H1 (cell line): ENCODE measurements at regions of chr20 and their contacts with region 1.

Region 1: GRCh38 chr20:21048841-21049273 is 57.3 kb downstream of the LINC00237 start:
- DNase-seq: peak in 1 of 2 experiments; percentile 96
- H3K4me3 ChIP-seq: no peak overlapping the region
- H3K27ac ChIP-seq: no peak overlapping the region
- H3K4me1 ChIP-seq: peaks cover 5 to 13% (median 10%) of the 10 kb centered on the region in 4 experiments; a peak in 6 of 7 replicates
- H3K27me3 ChIP-seq: no peaks in the 10 kb centered on the region
- CTCF ChIP-seq: peak; percentile 81 to 91 (median 90)
- EP300 ChIP-seq: no peak
- POLR2A ChIP-seq: no peak
- RAD21 ChIP-seq: peak; percentile 83 to 86

Region 2: GRCh38 chr20:20603339-20603990 is 445.4 kb before region 1 on chr20:
- CTCF ChIA-PET with region 1: no interaction called
- POLR2A ChIA-PET with region 1: no interaction called
- DNase-seq: no peak
- H3K4me3 ChIP-seq: no peak overlapping the region
- H3K27ac ChIP-seq: no peak overlapping the region
- H3K4me1 ChIP-seq: no peaks in the 10 kb centered on the region; a peak in 1 of 7 replicates
- H3K27me3 ChIP-seq: no peaks in the 10 kb centered on the region
- CTCF ChIP-seq: no peak
- EP300 ChIP-seq: no peak
- POLR2A ChIP-seq: no peak
- RAD21 ChIP-seq: no peak

Region 3: GRCh38 chr20:20837574-20838021 is 211.3 kb before region 1 on chr20:
- CTCF ChIA-PET with region 1: interaction called, 10 read pairs
- POLR2A ChIA-PET with region 1: no interaction called
- DNase-seq: peak in 1 of 2 experiments; percentile 78
- H3K4me3 ChIP-seq: no peak overlapping the region
- H3K27ac ChIP-seq: no peak overlapping the region
- H3K4me1 ChIP-seq: no peaks in the 10 kb centered on the region
- H3K27me3 ChIP-seq: no peaks in the 10 kb centered on the region; a peak in 1 of 7 replicates
- CTCF ChIP-seq: peak; percentile 53 to 77 (median 72)
- EP300 ChIP-seq: no peak
- POLR2A ChIP-seq: no peak
- RAD21 ChIP-seq: peak; percentile 83 to 85

Region 4: GRCh38 chr20:21027569-21027968 is 21.3 kb before region 1 on chr20:
- CTCF ChIA-PET with region 1: interaction called, 95 read pairs
- POLR2A ChIA-PET with region 1: no interaction called
- DNase-seq: peak; percentile 46 to 73
- H3K4me3 ChIP-seq: no peak overlapping the region
- H3K27ac ChIP-seq: no peak overlapping the region
- H3K4me1 ChIP-seq: no peaks in the 10 kb centered on the region
- H3K27me3 ChIP-seq: no peaks in the 10 kb centered on the region
- CTCF ChIP-seq: peak; percentile 58 to 68 (median 67)
- EP300 ChIP-seq: no peak
- POLR2A ChIP-seq: no peak
- RAD21 ChIP-seq: peak; percentile 49 to 71

Region 5: GRCh38 chr20:21099751-21100577 is 51.1 kb after region 1 on chr20:
- CTCF ChIA-PET with region 1: interaction called, 17 read pairs
- POLR2A ChIA-PET with region 1: interaction called, 5 read pairs
- DNase-seq: peak in 1 of 2 experiments; percentile 68
- H3K4me3 ChIP-seq: peak overlapping the region; percentile 44 to 78 (median 64)
- H3K27ac ChIP-seq: no peak overlapping the region
- H3K4me1 ChIP-seq: peaks cover 10 to 23% (median 17%) of the 10 kb centered on the region in 4 experiments
- H3K27me3 ChIP-seq: peaks cover 26 to 84% (median 74%) of the 10 kb centered on the region in 4 experiments
- CTCF ChIP-seq: no peak
- EP300 ChIP-seq: no peak
- POLR2A ChIP-seq: no peak
- RAD21 ChIP-seq: no peak

Region 6: DNA sequence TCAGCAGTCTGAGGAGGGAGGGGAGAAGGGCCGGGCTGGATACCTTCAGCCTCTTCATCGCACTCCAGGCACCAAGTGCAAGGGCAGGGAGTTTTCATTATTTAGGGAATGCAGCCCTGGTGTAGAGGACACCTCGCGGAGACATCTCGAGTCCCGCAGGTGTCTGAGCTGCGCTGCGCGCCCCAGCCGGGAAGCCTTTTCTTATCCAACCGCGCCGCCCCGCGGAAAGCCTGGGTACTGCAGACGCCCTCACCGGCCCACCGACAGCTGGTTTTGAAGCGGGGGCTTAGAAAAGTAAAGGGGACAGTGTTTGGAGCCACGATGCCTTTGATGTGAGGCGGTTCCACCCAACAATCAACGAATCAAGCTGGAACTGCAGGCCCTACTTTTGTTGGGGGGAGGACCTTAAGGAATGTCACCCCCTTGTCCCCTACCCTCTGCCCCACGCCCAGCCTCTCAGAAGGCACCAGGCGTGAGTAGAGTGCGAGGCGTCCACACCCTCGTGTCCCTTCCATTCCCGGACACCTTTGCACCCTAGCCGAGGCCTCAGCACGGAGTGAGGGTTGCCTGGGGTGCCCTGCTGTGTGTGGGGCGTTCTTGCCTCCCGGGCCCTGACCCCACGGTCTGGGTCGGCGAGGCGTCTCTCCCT is 456.4 kb after region 1 on chr20:
- CTCF ChIA-PET with region 1: interaction called, 14 read pairs
- POLR2A ChIA-PET with region 1: no interaction called
- DNase-seq: peak in 1 of 2 experiments; percentile 100
- H3K4me3 ChIP-seq: peak overlapping the region; percentile 28 to 69 (median 48)
- H3K27ac ChIP-seq: no peak overlapping the region
- H3K4me1 ChIP-seq: peaks cover 6 to 33% (median 10%) of the 10 kb centered on the region in 4 experiments; a peak in 6 of 7 replicates
- H3K27me3 ChIP-seq: peaks cover 47 to 68% (median 59%) of the 10 kb centered on the region in 4 experiments
- CTCF ChIP-seq: peak; percentile 88 to 96 (median 95)
- EP300 ChIP-seq: no peak
- POLR2A ChIP-seq: no peak
- RAD21 ChIP-seq: peak; percentile 100